ENCODE measurements at regions of chr10 and their contacts with region 1.

Region 1: DNA sequence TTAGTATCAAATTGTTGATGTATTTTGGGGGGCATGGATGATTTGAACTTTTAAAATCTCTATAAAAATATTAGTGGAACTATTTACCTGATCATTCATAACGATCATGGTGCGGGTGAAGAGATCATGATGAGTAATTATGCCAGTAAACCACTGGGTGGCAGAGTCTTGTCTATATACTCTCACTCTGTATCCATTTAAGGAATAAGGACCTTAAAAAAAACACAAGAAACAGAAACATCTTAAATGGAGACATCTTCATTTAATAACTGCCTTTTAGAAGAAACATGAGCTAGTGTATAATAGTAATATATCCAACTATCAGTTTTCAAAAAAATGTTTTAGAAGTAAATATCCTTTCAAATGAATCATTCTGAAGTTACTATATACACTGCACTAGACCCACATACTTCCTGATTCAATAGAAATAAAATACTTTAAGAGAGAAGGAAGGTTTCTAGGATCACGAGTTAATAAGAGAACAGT is 84.0 kb downstream of the NRBF2 start:
- DNase-seq: peak; percentile 73
- H3K4me3 ChIP-seq: no peak overlapping the region
- H3K27ac ChIP-seq: no peak overlapping the region
- H3K4me1 ChIP-seq: peaks cover 44% of the 10 kb centered on the region
- CTCF ChIP-seq: peak; percentile 93

Region 2: GRCh38 chr10:63465293-63466143 is 248.4 kb after region 1 on chr10 and contains the start of gene JMJD1C:
- CTCF ChIA-PET with region 1: no interaction called
- POLR2A ChIA-PET with region 1: no interaction called
- intact Hi-C with region 1: loop called (anchors 5 kb)
- DNase-seq: peak; percentile 61
- H3K4me3 ChIP-seq: peak within 1 kb of the TSS; percentile 73
- H3K27ac ChIP-seq: no peak within 1 kb of the TSS
- H3K4me1 ChIP-seq: peaks cover 7% of the 10 kb centered on the region
- CTCF ChIP-seq: peak; percentile 34; the same call in 1 of the 2 replicates
- total RNA-seq, gene JMJD1C: 99.2 and 104 TPM in 2 replicates